ENCODE measurements at regions of chr6 and their contacts with region 1.

Region 1: GRCh38 chr6:3337521-3338350 is 79.0 kb downstream of the PSMG4 start:
- DNase-seq: peak; percentile 22
- ATAC-seq: no peak
- H3K4me3 ChIP-seq: peak overlapping the region in 1 of 5 experiments; percentile 17
- H3K4me3 Mint-ChIP-seq: peak overlapping the region; percentile 61
- H3K27ac ChIP-seq: no peak overlapping the region
- H3K27ac Mint-ChIP-seq: no peak overlapping the region
- H3K4me1 ChIP-seq: peaks cover 7 to 14% of the 10 kb centered on the region in 2 donors
- H3K4me1 Mint-ChIP-seq: peaks cover 12% of the 10 kb centered on the region
- H3K27me3 ChIP-seq: no peaks in the 10 kb centered on the region
- H3K27me3 Mint-ChIP-seq: peaks cover 26% of the 10 kb centered on the region
- CTCF ChIP-seq: no peak

Region 2: DNA sequence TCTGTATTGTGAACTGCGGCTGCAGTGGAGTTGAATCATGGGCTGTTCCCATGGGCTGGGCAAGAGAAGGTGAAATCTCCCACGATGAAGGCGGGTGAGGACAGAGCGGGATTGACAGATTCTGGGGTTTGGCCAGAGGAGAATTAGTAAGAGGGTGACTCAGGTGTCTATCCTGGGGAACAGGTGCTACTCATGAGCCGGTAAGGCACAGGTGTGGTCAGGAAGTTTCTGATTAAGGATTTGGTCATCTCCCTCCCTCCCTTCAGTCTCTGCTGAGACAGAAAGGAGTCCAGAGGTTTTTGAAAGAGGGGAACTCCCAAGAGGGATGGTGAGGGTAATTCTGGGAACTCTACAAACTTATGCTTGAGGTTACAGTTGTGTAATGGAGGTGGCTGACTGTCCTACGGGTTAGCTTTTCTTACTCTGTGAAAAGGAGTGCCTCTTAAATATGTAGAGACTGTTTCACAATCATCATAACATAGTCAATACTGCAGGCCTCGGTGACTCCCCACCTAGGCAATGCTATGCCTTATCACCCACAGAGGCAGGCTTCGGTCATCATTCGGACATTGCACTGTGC is 527.6 kb before region 1 on chr6:
- CTCF ChIA-PET with region 1: no interaction called
- POLR2A ChIA-PET with region 1: no interaction called
- intact Hi-C with region 1: no loop called
- DNase-seq: no peak
- ATAC-seq: no peak
- H3K4me3 ChIP-seq: no peak overlapping the region
- H3K4me3 Mint-ChIP-seq: no peak overlapping the region
- H3K27ac ChIP-seq: no peak overlapping the region
- H3K27ac Mint-ChIP-seq: no peak overlapping the region
- H3K4me1 ChIP-seq: no peaks in the 10 kb centered on the region
- H3K4me1 Mint-ChIP-seq: no peaks in the 10 kb centered on the region
- H3K27me3 ChIP-seq: no peaks in the 10 kb centered on the region
- H3K27me3 Mint-ChIP-seq: no peaks in the 10 kb centered on the region
- CTCF ChIP-seq: no peak

Region 3: GRCh38 chr6:3137057-3137777 is 200.5 kb before region 1 on chr6:
- CTCF ChIA-PET with region 1: no interaction called
- POLR2A ChIA-PET with region 1: no interaction called
- intact Hi-C with region 1: no loop called
- DNase-seq: no peak
- ATAC-seq: no peak
- H3K4me3 ChIP-seq: no peak overlapping the region
- H3K4me3 Mint-ChIP-seq: no peak overlapping the region
- H3K27ac ChIP-seq: no peak overlapping the region
- H3K27ac Mint-ChIP-seq: no peak overlapping the region
- H3K4me1 ChIP-seq: peaks cover 10 to 11% of the 10 kb centered on the region in 2 donors
- H3K4me1 Mint-ChIP-seq: peaks cover 12% of the 10 kb centered on the region
- H3K27me3 ChIP-seq: no peaks in the 10 kb centered on the region
- H3K27me3 Mint-ChIP-seq: no peaks in the 10 kb centered on the region
- CTCF ChIP-seq: no peak

Region 4: DNA sequence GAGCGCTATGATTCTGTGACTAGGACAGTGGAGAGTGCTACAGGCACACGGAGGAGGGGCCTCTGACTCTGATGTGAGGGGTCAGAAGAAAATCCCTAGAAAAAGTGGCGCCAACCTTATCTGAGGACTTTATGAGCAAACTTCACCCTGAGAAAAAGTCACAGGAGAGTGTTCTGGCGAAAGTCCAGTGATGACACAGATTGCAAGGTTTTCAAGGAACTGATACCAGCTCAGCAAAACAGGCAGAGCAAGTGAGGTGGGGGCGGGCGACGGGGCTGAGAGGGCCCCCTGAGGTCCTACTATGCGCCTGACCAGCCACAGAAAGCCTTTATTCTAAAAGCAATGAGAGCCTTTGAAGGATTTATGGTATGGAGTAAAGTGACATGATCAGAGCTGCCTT is 45.8 kb after region 1 on chr6:
- CTCF ChIA-PET with region 1: no interaction called
- POLR2A ChIA-PET with region 1: no interaction called
- intact Hi-C with region 1: loop called (anchors 10 kb)
- DNase-seq: no peak
- ATAC-seq: no peak
- H3K4me3 ChIP-seq: no peak overlapping the region
- H3K4me3 Mint-ChIP-seq: no peak overlapping the region
- H3K27ac ChIP-seq: no peak overlapping the region
- H3K27ac Mint-ChIP-seq: no peak overlapping the region
- H3K4me1 ChIP-seq: peaks cover 14 to 17% of the 10 kb centered on the region in 2 donors
- H3K4me1 Mint-ChIP-seq: peaks cover 26% of the 10 kb centered on the region
- H3K27me3 ChIP-seq: peaks cover 0 to 6% (median 0%) of the 10 kb centered on the region in 4 experiments
- H3K27me3 Mint-ChIP-seq: peaks cover 26% of the 10 kb centered on the region
- CTCF ChIP-seq: no peak

Region 5: GRCh38 chr6:4240148-4240547 is 902.4 kb after region 1 on chr6:
- CTCF ChIA-PET with region 1: no interaction called
- POLR2A ChIA-PET with region 1: no interaction called
- intact Hi-C with region 1: no loop called
- DNase-seq: no peak
- ATAC-seq: no peak
- H3K4me3 ChIP-seq: no peak overlapping the region
- H3K4me3 Mint-ChIP-seq: no peak overlapping the region
- H3K27ac ChIP-seq: no peak overlapping the region
- H3K27ac Mint-ChIP-seq: no peak overlapping the region
- H3K4me1 ChIP-seq: no peaks in the 10 kb centered on the region
- H3K4me1 Mint-ChIP-seq: no peaks in the 10 kb centered on the region
- H3K27me3 ChIP-seq: no peaks in the 10 kb centered on the region
- H3K27me3 Mint-ChIP-seq: peaks cover 3% of the 10 kb centered on the region
- CTCF ChIP-seq: no peak